Cardiac septum (tissue), 1 donor: ENCODE measurements at regions of chrX and their contacts with region 1.

Region 1: GRCh38 chrX:16719334-16720084 is at the start of gene SYAP1:
- DNase-seq: peak; percentile 99
- total RNA-seq, gene SYAP1: 21.0 TPM

Region 2: DNA sequence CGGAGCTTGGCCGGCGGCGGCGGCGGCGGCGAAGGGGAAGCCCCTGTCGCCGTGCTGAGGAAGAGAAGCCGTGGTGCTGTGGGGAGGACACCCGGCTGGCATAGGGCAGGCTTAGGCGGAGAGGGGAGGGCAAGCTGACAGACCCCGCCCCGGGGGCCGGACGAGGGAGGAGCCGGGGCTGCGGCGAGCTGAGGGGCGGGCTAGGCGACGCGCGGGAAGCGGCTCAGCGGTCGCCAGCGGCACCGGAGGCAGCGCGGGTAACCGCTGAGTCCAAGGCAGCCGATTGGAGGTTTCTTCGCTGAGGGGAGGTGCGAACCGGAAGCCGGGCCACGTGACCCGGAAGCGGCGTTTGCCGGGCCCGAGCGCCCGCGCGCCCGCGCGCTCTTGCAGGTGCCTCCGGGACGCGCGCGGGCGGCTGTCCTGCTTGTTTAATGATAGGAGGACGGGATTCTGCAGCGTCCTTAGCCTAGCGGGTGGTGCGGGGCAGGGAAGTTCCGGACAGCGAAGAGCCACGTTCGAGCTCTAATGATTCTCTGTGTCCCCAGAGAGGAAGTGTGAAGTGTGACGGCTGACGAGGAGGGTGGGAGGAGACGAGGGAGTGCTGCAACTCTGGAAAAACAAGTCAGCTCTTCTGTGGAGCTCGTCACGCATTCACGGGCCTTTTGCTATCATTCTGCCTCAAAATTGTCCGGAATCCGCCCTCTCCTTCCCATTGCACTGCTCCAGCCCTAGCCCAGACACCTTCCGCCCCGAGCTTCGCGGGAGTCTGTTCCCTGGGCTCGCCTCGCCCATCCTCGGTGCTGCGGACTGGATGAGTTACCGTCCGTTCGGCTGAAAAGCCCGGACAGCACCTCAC is 864.6 kb before region 1 on chrX and contains the start of gene AP1S2:
- intact Hi-C with region 1: loop called (anchors 10 kb)
- DNase-seq: peak; percentile 97
- total RNA-seq, gene AP1S2: 198 TPM

Region 3: GRCh38 chrX:16786139-16786790 is 66.8 kb after region 1 on chrX and contains the start of gene TXLNG:
- intact Hi-C with region 1: loop called (anchors 2 kb)
- DNase-seq: peak; percentile 99
- total RNA-seq, gene TXLNG: 6.8 TPM